Breast epithelium (tissue), 4 donors: ENCODE measurements at regions of chr6 and their contacts with region 1.

Region 1: GRCh38 chr6:108609276-108609769 is 48.6 kb downstream of the FOXO3 start:
- DNase-seq: no peak
- H3K4me3 ChIP-seq: peak overlapping the region in 1 of 3 donors; percentile 14
- H3K27ac ChIP-seq: peak overlapping the region; percentile 62 to 80
- H3K4me1 ChIP-seq: peaks cover 0 to 29% of the 10 kb centered on the region in 2 donors
- H3K27me3 ChIP-seq: no peaks in the 10 kb centered on the region
- CTCF ChIP-seq: no peak
- POLR2A ChIP-seq: no peak

Region 2: GRCh38 chr6:107820338-107821261 is 788.7 kb before region 1 on chr6:
- intact Hi-C with region 1: no loop called
- DNase-seq: no peak
- H3K4me3 ChIP-seq: peak overlapping the region; percentile 1 to 49 (median 30)
- H3K27ac ChIP-seq: no peak overlapping the region
- H3K4me1 ChIP-seq: no peaks in the 10 kb centered on the region
- H3K27me3 ChIP-seq: no peaks in the 10 kb centered on the region
- CTCF ChIP-seq: no peak
- POLR2A ChIP-seq: no peak

Region 3: GRCh38 chr6:108531336-108531735 is 78.0 kb before region 1 on chr6:
- intact Hi-C with region 1: no loop called
- DNase-seq: no peak
- H3K4me3 ChIP-seq: no peak overlapping the region
- H3K27ac ChIP-seq: no peak overlapping the region
- H3K4me1 ChIP-seq: no peaks in the 10 kb centered on the region
- H3K27me3 ChIP-seq: no peaks in the 10 kb centered on the region
- CTCF ChIP-seq: no peak
- POLR2A ChIP-seq: no peak

Region 4: DNA sequence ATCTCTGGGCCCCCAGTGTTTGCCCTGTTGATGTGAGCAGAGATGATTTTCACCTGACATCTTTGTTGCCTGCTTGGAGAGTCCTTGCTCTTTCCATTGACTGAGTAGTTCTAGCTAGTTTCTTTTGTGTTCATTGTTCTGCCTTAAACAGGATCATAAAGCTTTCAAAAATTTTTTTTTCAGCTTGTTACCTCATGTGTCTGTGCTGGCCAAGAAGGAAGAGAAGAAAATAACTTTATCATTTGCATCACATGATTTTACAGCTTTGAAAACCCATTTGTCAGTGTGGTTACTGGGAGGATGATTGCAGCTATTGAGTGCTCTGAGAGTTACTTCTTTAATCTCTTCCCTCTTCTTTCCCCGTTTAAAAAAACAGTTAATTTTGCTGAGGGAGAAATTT is 32.6 kb before region 1 on chr6:
- intact Hi-C with region 1: loop called (anchors 2 kb)
- DNase-seq: no peak
- H3K4me3 ChIP-seq: no peak overlapping the region
- H3K27ac ChIP-seq: peak overlapping the region in 1 of 2 donors; percentile 79
- H3K4me1 ChIP-seq: peaks cover 0 to 24% of the 10 kb centered on the region in 2 donors
- H3K27me3 ChIP-seq: no peaks in the 10 kb centered on the region
- CTCF ChIP-seq: no peak
- POLR2A ChIP-seq: no peak

Region 5: GRCh38 chr6:108592371-108593337 is 16.7 kb before region 1 on chr6:
- intact Hi-C with region 1: loop called (anchors 2 kb)
- DNase-seq: peak in 1 of 2 donors; percentile 71
- H3K4me3 ChIP-seq: peak overlapping the region in 2 of 3 donors; percentile 3 to 39
- H3K27ac ChIP-seq: peak overlapping the region; percentile 93 to 96
- H3K4me1 ChIP-seq: peaks cover 39 to 60% of the 10 kb centered on the region in 2 donors
- H3K27me3 ChIP-seq: no peaks in the 10 kb centered on the region
- CTCF ChIP-seq: no peak
- POLR2A ChIP-seq: no peak

Region 6: DNA sequence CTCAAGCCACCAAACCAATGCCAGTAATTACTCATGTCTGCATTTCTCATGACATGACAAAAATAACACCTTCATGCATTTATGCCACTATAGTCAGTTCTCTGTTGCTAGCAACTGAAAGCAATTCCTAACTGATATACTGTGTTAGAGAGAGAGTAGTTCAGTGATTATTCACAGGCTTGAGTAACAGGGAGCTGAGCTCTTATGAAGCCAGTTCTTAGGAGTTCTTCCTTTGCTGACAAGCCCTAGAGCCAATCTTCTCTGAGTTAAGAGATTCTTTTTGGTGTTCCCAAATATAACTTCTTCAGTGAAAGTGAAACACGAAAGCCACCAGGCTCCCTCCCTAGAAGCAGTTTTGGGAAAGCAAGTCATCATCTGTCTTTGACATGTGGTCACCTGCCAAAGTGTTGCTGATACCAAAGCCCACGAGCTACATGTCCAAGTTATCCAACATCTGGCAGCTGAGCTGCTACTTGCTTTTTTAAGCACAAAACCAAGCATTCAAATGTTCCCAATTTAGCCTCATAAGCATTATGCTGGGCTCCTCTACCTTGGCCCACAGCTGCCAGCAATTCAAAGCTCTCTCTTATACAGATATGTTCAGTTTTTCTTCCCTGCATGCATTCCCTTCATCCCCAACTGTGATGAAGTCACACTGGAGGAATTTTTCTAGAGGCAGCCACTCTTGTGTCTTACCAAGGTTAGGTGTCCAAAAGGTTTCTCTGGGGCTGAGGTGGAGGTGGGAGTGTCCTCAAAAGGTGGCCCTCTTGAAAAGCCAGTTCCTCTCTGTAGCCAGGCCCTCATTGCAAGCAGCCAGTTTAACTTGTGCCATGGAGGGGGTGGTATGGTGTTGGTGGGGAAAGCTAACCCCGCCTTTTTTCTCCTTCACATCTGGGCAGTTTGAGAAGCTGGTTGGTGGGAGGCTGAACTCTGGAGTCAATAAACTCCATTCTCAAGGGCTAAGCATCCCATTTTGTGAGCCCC is 146.2 kb after region 1 on chr6:
- intact Hi-C with region 1: loop called (anchors 2 kb)
- DNase-seq: no peak
- H3K4me3 ChIP-seq: no peak overlapping the region
- H3K27ac ChIP-seq: no peak overlapping the region
- H3K4me1 ChIP-seq: no peaks in the 10 kb centered on the region
- H3K27me3 ChIP-seq: no peaks in the 10 kb centered on the region
- CTCF ChIP-seq: no peak
- POLR2A ChIP-seq: no peak